CD4-positive, alpha-beta memory T cell (primary cell): ENCODE measurements at regions of chr4 and their contacts with region 1.

Region 1: GRCh38 chr4:185304944-185305690 is 90.6 kb downstream of the LRP2BP start:
- DNase-seq: peak; percentile 14 to 51 (median 24)
- H3K4me3 ChIP-seq: no peak overlapping the region
- H3K4me3 Mint-ChIP-seq: no peak overlapping the region
- H3K27ac ChIP-seq: no peak overlapping the region
- H3K27ac Mint-ChIP-seq: peak overlapping the region in 2 of 7 donors; percentile 67 to 71
- H3K4me1 ChIP-seq: no peaks in the 10 kb centered on the region
- H3K4me1 Mint-ChIP-seq: peaks cover 0 to 5% (median 1%) of the 10 kb centered on the region in 4 donors
- H3K27me3 ChIP-seq: no peaks in the 10 kb centered on the region
- H3K27me3 Mint-ChIP-seq: no peaks in the 10 kb centered on the region

Region 2: GRCh38 chr4:185005216-185005819 is 299.8 kb before region 1 on chr4:
- CTCF ChIA-PET with region 1: no interaction called
- POLR2A ChIA-PET with region 1: no interaction called
- intact Hi-C with region 1: loop called (anchors 1 kb)
- DNase-seq: peak; percentile 62 to 67 (median 64)
- H3K4me3 ChIP-seq: no peak overlapping the region
- H3K4me3 Mint-ChIP-seq: peak overlapping the region; percentile 30 to 72 (median 60)
- H3K27ac ChIP-seq: no peak overlapping the region
- H3K27ac Mint-ChIP-seq: peak overlapping the region in 1 of 7 donors; percentile 6
- H3K4me1 ChIP-seq: peaks cover 7% of the 10 kb centered on the region
- H3K4me1 Mint-ChIP-seq: peaks cover 4 to 12% (median 5%) of the 10 kb centered on the region in 4 donors
- H3K27me3 ChIP-seq: no peaks in the 10 kb centered on the region
- H3K27me3 Mint-ChIP-seq: peaks cover 25 to 42% of the 10 kb centered on the region in 2 donors

Region 3: GRCh38 chr4:185039508-185040273 is 265.4 kb before region 1 on chr4:
- CTCF ChIA-PET with region 1: interaction called, 7 read pairs
- POLR2A ChIA-PET with region 1: no interaction called
- intact Hi-C with region 1: loop called (anchors 1 kb)
- DNase-seq: peak; percentile 46 to 60 (median 56)
- H3K4me3 ChIP-seq: no peak overlapping the region
- H3K4me3 Mint-ChIP-seq: peak overlapping the region in 3 of 8 donors; percentile 1 to 35 (median 33)
- H3K27ac ChIP-seq: no peak overlapping the region
- H3K27ac Mint-ChIP-seq: no peak overlapping the region
- H3K4me1 ChIP-seq: peaks cover 7% of the 10 kb centered on the region
- H3K4me1 Mint-ChIP-seq: peaks cover 4 to 6% (median 4%) of the 10 kb centered on the region in 4 donors
- H3K27me3 ChIP-seq: no peaks in the 10 kb centered on the region
- H3K27me3 Mint-ChIP-seq: peaks cover 9 to 16% of the 10 kb centered on the region in 2 donors

Region 4: DNA sequence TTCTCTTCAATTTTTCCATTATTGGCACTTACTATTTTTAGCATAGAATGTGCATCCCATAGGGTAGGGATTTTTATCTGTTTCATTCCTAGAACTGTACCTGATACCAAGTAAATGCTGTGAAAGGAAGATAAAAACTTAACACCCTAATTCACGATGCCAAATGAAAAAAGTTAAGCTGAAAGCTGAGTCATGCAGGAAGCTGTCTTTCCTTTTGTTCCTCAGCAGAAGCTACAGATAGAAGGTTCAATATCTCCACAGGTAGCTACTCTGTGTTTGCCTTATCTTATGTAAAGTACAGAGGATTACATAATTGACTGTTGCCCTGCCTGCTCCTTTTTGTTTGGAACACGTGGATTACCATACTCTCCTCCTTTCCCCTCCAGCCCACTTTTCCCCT is 13.6 kb after region 1 on chr4:
- CTCF ChIA-PET with region 1: no interaction called
- POLR2A ChIA-PET with region 1: no interaction called
- intact Hi-C with region 1: no loop called
- DNase-seq: no peak
- H3K4me3 ChIP-seq: no peak overlapping the region
- H3K4me3 Mint-ChIP-seq: no peak overlapping the region
- H3K27ac ChIP-seq: no peak overlapping the region
- H3K27ac Mint-ChIP-seq: peak overlapping the region in 2 of 7 donors; percentile 27 to 47
- H3K4me1 ChIP-seq: peaks cover 5% of the 10 kb centered on the region
- H3K4me1 Mint-ChIP-seq: peaks cover 4 to 8% (median 6%) of the 10 kb centered on the region in 4 donors
- H3K27me3 ChIP-seq: no peaks in the 10 kb centered on the region
- H3K27me3 Mint-ChIP-seq: no peaks in the 10 kb centered on the region